B cell (primary cell): ENCODE measurements at regions of chr22 and their contacts with region 1.

Region 1: DNA sequence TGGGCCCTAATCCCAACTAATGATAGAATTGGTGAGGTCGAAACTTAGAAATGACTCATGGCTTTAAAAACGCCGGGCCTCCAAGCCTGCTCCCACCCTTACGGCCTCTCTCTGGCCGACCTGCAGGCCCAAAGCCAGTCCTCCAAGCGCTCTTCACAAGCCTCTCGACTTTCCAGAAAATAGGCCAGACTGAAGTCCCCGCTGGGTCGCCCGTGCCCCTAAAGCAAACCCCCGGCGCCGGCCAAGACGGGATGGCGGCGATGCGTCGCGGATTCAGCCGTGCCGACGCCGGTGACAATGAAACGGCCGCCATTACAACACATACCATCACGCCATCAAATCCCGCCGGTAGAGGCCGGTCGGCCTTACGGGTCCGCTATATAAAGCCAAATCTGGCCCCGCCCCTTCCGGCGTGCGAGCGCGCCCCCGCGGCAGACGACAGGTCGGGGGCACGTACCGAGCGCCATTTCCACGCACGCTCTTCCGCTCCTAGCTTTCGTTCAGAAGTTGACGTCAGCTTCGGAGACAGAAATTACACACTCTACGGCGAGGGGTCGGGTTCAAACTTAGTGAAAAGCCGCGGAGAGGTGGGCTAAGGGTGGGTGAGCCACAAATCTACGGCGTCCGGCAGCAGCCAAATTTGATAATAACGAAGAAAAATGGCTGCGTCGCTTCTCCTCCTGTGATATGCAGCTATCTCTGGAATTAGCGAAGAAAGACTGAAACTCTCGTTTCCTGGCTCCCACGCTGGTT is at the start of gene RPL3:
- DNase-seq: peak; percentile 100
- ATAC-seq: peak; percentile 86
- H3K4me3 ChIP-seq: peak within 1 kb of the TSS; percentile 80 to 99 (median 85)
- H3K4me3 Mint-ChIP-seq: peak within 1 kb of the TSS; percentile 99
- H3K27ac ChIP-seq: peak within 1 kb of the TSS; percentile 90 to 95
- H3K27ac Mint-ChIP-seq: peak within 1 kb of the TSS; percentile 98
- H3K4me1 ChIP-seq: peaks cover 27 to 38% of the 10 kb centered on the region in 2 donors
- H3K4me1 Mint-ChIP-seq: peaks cover 38% of the 10 kb centered on the region
- H3K27me3 ChIP-seq: no peaks in the 10 kb centered on the region
- H3K27me3 Mint-ChIP-seq: no peaks in the 10 kb centered on the region
- CTCF ChIP-seq: no peak
- total RNA-seq, gene RPL3: 2,562 and 2,665 TPM in 2 replicates

Region 2: GRCh38 chr22:38973289-38974169 is 345.9 kb before region 1 on chr22:
- CTCF ChIA-PET with region 1: no interaction called
- POLR2A ChIA-PET with region 1: interaction called, 3 read pairs
- intact Hi-C with region 1: loop called (anchors 1 kb)
- DNase-seq: peak; percentile 71
- ATAC-seq: peak; percentile 89
- H3K4me3 ChIP-seq: no peak overlapping the region
- H3K4me3 Mint-ChIP-seq: no peak overlapping the region
- H3K27ac ChIP-seq: no peak overlapping the region
- H3K27ac Mint-ChIP-seq: no peak overlapping the region
- H3K4me1 ChIP-seq: peaks cover 0 to 8% of the 10 kb centered on the region in 2 donors
- H3K4me1 Mint-ChIP-seq: peaks cover 6% of the 10 kb centered on the region
- H3K27me3 ChIP-seq: peaks cover 0 to 20% (median 0%) of the 10 kb centered on the region in 4 experiments
- H3K27me3 Mint-ChIP-seq: peaks cover 24% of the 10 kb centered on the region
- CTCF ChIP-seq: peak; percentile 92

Region 3: DNA sequence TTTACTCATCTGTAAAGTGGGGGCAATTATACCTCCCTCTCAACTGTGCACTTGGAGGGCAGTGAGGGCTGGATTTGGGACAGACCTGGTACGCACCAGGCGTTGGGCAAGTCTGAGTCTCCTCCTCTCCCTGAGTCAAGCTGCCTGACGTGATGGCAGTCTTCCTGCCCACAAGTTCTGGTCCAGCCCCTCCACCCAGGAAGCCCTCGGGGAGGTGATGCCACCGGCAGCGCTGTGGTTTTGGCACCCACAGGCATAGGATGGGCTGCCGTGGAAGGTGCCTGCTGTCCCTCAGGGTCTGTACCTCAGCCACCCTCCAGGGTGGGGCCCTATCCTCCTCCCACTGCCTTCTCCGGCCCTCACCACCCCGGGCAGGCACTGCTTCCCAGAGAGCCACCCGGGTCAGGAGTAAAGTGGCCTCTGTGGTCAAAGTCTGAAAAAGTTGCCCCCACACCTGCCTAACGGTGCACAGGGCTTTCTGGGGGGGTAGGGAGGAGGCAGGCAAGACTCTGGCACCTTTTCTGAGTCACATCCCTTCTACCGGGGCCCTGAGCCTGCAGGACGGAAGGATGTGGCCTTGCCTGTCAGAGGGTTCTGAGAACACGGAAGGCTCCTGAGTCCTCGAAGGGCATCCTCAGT is 228.9 kb before region 1 on chr22:
- CTCF ChIA-PET with region 1: no interaction called
- POLR2A ChIA-PET with region 1: no interaction called
- intact Hi-C with region 1: no loop called
- DNase-seq: no peak
- ATAC-seq: peak; percentile 59
- H3K4me3 ChIP-seq: peak overlapping the region in 1 of 5 experiments; percentile 5
- H3K4me3 Mint-ChIP-seq: no peak overlapping the region
- H3K27ac ChIP-seq: peak overlapping the region; percentile 45 to 58
- H3K27ac Mint-ChIP-seq: peak overlapping the region; percentile 86
- H3K4me1 ChIP-seq: peaks cover 28 to 38% of the 10 kb centered on the region in 2 donors
- H3K4me1 Mint-ChIP-seq: peaks cover 48% of the 10 kb centered on the region
- H3K27me3 ChIP-seq: no peaks in the 10 kb centered on the region
- H3K27me3 Mint-ChIP-seq: no peaks in the 10 kb centered on the region
- CTCF ChIP-seq: no peak

Region 4: DNA sequence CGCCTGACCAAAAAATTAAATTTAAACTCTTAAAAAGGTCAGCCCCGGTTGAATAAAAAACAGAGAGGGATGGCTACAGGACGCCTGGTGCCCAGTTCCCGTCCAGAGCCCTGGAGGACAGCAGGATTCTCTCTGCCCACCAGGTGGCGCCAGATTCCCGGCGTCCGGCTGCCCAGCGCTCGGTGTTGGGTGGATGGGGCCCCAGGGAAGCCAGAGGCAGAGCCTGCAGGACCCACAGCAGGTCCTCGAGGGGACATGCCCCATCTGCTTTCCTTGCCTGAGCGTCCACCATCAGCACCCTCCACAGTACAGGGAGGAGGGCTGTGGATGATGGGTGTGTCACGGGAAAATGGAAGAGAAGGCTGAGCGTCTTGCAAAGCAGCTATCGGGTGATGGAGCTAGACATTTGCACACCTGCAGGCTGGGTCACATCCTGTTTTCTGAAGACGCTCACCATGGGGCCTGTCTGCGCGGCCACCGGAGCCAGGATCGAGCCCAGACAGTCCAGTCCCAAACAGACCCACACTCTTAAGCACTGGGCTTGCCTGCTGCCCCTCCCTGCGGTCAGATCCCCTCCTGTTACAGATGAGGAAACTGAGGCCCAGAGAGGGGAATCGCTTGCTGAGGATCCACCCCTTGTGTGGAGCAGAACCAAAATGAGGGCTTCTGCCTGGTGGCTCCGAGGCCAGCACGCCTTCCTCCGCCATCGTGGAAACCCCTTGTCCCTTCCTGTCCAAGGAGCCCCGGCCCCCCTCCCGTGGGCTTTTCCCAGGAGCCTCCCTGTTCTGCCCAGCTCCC is 148.4 kb before region 1 on chr22:
- CTCF ChIA-PET with region 1: interaction called, 171 read pairs
- POLR2A ChIA-PET with region 1: interaction called, 17 read pairs
- intact Hi-C with region 1: loop called (anchors 1 kb)
- DNase-seq: peak; percentile 91
- ATAC-seq: peak; percentile 82
- H3K4me3 ChIP-seq: peak overlapping the region in 4 of 5 experiments; percentile 30 to 50 (median 46)
- H3K4me3 Mint-ChIP-seq: peak overlapping the region; percentile 88
- H3K27ac ChIP-seq: peak overlapping the region; percentile 44 to 81
- H3K27ac Mint-ChIP-seq: peak overlapping the region; percentile 92
- H3K4me1 ChIP-seq: peaks cover 32 to 45% of the 10 kb centered on the region in 2 donors
- H3K4me1 Mint-ChIP-seq: peaks cover 40% of the 10 kb centered on the region
- H3K27me3 ChIP-seq: no peaks in the 10 kb centered on the region
- H3K27me3 Mint-ChIP-seq: peaks cover 3% of the 10 kb centered on the region
- CTCF ChIP-seq: peak; percentile 99

Region 5: DNA sequence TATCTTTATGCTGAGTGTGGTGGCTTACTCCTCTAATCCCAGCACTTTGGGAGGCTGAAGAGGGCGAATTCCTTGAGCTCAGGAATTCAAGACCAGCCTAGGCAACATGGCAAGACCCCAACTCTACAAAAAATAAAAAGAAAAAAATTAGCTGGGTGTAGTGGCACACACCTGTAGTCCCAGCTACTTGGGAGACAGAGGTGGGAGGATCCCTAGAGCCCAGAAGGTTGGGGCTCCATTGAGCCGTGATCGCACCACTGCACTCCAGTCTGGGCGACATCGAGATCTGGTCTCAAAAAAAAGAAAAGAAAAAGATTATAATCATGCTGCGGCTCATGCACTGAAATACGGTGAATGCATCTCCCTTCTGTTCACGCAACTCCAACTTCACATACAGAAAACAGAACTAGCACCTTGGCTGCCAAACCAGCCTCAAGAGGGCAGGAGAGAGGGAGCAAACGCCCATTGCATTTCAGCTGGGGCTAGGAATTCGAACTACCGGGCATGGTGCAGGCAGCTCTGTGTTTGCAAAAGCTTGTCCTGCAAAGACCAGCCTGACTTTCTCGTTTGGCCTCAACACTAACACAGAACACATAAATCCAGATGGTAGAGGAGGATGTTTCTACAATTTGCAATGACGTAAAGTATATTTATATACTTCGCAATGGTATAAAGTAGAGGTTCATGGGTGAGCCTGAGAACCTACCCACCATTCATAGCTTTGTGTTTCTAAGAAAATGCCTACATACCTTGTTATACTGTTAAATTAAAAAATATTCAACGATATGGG is 24.0 kb after region 1 on chr22:
- CTCF ChIA-PET with region 1: interaction called, 16 read pairs
- POLR2A ChIA-PET with region 1: interaction called, 40 read pairs
- intact Hi-C with region 1: no loop called
- DNase-seq: peak; percentile 76
- ATAC-seq: peak; percentile 90
- H3K4me3 ChIP-seq: no peak overlapping the region
- H3K4me3 Mint-ChIP-seq: no peak overlapping the region
- H3K27ac ChIP-seq: no peak overlapping the region
- H3K27ac Mint-ChIP-seq: no peak overlapping the region
- H3K4me1 ChIP-seq: peaks cover 6 to 8% of the 10 kb centered on the region in 2 donors
- H3K4me1 Mint-ChIP-seq: peaks cover 4% of the 10 kb centered on the region
- H3K27me3 ChIP-seq: peaks cover 0 to 10% (median 0%) of the 10 kb centered on the region in 4 experiments
- H3K27me3 Mint-ChIP-seq: peaks cover 10% of the 10 kb centered on the region
- CTCF ChIP-seq: peak; percentile 85

Region 6: GRCh38 chr22:39395936-39396796 is 76.7 kb after region 1 on chr22:
- CTCF ChIA-PET with region 1: interaction called, 4 read pairs
- POLR2A ChIA-PET with region 1: interaction called, 6 read pairs
- intact Hi-C with region 1: loop called (anchors 1 kb)
- DNase-seq: no peak
- ATAC-seq: no peak
- H3K4me3 ChIP-seq: no peak overlapping the region
- H3K4me3 Mint-ChIP-seq: no peak overlapping the region
- H3K27ac ChIP-seq: no peak overlapping the region
- H3K27ac Mint-ChIP-seq: no peak overlapping the region
- H3K4me1 ChIP-seq: peaks cover 9 to 16% of the 10 kb centered on the region in 2 donors
- H3K4me1 Mint-ChIP-seq: peaks cover 15% of the 10 kb centered on the region
- H3K27me3 ChIP-seq: no peaks in the 10 kb centered on the region
- H3K27me3 Mint-ChIP-seq: no peaks in the 10 kb centered on the region
- CTCF ChIP-seq: no peak